PC-3 (cell line): ENCODE measurements at regions of chr10 and their contacts with region 1.

Region 1: GRCh38 chr10:35635576-35635975 is 6.5 kb downstream of the FZD8 start:
- DNase-seq: peak; percentile 100
- ATAC-seq: peak; percentile 21
- H3K4me3 ChIP-seq: peak overlapping the region; percentile 69
- H3K27ac ChIP-seq: peak overlapping the region; percentile 71
- H3K4me1 ChIP-seq: peaks cover 63% of the 10 kb centered on the region
- H3K27me3 ChIP-seq: no peaks in the 10 kb centered on the region
- CTCF ChIP-seq: peak; percentile 100

Region 2: DNA sequence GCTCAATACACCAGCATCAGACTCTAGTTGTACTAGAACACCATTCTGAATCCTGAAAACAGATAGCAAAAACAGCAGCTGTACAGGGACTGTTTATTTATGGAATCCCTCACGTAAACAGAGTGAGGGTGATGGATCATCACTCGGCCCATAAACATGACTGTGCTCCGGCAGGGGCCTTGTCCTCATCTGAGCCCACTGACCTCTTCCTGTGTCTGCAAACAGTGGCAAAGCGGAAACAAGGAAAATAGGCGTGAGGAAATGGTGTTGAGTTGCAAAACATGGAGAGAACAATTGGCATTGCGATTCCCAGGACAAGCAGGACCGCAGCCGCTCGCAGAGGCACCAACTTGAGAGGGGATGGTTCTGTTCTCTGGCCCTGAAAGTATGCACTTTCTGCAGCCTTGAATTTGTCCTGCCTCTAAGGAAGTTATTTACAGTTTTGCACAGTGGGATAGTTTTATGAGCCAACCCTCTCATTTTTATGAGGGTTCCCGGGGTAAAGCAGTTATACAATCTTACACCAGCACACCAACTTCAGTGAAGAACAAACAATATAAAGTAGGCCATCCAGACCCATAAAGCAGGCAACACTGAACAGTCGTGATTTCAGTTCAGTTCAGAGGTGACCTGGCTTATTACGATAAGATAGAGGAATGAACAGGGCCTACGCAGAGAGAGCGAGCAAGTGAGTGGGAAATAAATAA is 254.5 kb after region 1 on chr10:
- CTCF ChIA-PET with region 1: no interaction called
- POLR2A ChIA-PET with region 1: no interaction called
- intact Hi-C with region 1: loop called (anchors 2 kb)
- DNase-seq: peak; percentile 74
- ATAC-seq: peak; percentile 90
- H3K4me3 ChIP-seq: no peak overlapping the region
- H3K27ac ChIP-seq: peak overlapping the region; percentile 38
- H3K4me1 ChIP-seq: peaks cover 25% of the 10 kb centered on the region
- H3K27me3 ChIP-seq: no peaks in the 10 kb centered on the region
- CTCF ChIP-seq: no peak

Region 3: DNA sequence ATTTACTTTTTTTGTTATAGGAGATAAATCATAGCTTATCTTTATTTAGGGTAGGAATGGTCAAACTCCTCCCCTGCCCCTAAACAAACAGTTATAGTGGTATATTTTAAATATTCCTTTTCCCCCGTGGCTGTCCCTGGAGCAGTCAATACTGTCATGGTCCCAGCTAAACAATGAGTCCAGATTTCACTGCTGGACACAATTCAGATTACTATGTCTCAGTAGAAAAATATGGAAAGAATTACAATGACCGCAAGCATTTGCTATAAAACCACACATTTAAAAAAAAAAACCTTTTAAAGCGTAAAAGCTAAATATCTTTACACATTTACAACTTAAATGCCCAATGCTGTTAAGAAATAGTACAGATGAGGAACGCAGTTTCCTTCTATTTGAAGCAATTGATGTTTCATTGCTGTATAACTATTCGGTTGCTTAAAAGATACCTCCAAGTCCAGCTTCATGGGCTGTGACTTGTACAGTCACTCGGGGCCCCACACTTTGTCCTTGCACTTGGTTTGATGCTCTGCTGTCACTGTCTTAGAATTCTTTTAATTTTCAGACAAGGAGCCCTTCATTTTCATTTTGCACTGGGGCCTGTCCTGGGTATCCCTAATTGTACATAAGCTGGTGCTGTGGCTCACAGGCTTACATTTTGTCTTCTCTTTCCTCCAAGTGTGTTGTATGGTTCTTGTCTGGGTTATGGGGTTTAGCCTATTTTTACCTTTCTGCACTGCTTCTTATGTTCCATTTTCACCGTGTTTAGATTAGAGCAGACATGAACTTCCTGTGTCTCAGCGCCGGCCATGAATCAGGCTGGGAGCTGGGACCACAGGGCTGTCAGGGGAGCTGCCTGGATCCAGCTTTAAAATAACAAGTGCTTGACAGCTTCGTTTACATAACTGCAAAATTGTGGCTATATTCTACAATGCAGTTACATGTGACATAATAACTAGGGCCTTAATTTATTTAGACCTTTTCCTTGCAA is 536.7 kb after region 1 on chr10:
- CTCF ChIA-PET with region 1: interaction called, 6 read pairs
- POLR2A ChIA-PET with region 1: interaction called, 6 read pairs
- intact Hi-C with region 1: loop called (anchors 1 kb)
- DNase-seq: peak; percentile 99
- ATAC-seq: peak; percentile 71
- H3K4me3 ChIP-seq: peak overlapping the region; percentile 28
- H3K27ac ChIP-seq: peak overlapping the region; percentile 79
- H3K4me1 ChIP-seq: peaks cover 43% of the 10 kb centered on the region
- H3K27me3 ChIP-seq: no peaks in the 10 kb centered on the region
- CTCF ChIP-seq: no peak

Region 4: GRCh38 chr10:36462194-36462593 is 826.6 kb after region 1 on chr10:
- CTCF ChIA-PET with region 1: no interaction called
- POLR2A ChIA-PET with region 1: interaction called, 11 read pairs
- intact Hi-C with region 1: loop called (anchors 10 kb)
- DNase-seq: peak; percentile 95
- ATAC-seq: no peak
- H3K4me3 ChIP-seq: no peak overlapping the region
- H3K27ac ChIP-seq: no peak overlapping the region
- H3K4me1 ChIP-seq: peaks cover 40% of the 10 kb centered on the region
- H3K27me3 ChIP-seq: no peaks in the 10 kb centered on the region
- CTCF ChIP-seq: no peak

Region 5: DNA sequence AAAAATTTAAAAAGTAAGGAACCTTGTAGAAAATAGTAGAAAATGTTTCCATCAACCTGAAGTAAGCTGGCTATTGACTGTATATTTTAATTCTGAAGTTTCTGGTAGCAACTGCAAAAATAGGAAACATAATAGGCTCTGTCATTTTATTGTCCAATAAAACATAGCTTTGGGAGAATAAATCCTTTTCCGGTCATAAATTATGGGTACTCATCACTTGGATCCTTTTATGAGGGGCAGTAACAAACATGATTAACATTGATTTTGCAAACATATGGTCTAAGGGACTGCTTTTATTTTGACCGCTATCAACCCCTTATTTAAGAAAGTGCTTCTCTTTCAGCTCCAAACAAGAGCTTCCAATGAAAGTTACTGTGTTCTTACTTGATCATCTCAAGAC is 993.9 kb after region 1 on chr10:
- CTCF ChIA-PET with region 1: no interaction called
- POLR2A ChIA-PET with region 1: interaction called, 10 read pairs
- intact Hi-C with region 1: loop called (anchors 2 kb)
- DNase-seq: peak; percentile 76
- ATAC-seq: peak; percentile 71
- H3K4me3 ChIP-seq: no peak overlapping the region
- H3K27ac ChIP-seq: peak overlapping the region; percentile 81
- H3K4me1 ChIP-seq: peaks cover 24% of the 10 kb centered on the region
- H3K27me3 ChIP-seq: no peaks in the 10 kb centered on the region
- CTCF ChIP-seq: no peak

Region 6: DNA sequence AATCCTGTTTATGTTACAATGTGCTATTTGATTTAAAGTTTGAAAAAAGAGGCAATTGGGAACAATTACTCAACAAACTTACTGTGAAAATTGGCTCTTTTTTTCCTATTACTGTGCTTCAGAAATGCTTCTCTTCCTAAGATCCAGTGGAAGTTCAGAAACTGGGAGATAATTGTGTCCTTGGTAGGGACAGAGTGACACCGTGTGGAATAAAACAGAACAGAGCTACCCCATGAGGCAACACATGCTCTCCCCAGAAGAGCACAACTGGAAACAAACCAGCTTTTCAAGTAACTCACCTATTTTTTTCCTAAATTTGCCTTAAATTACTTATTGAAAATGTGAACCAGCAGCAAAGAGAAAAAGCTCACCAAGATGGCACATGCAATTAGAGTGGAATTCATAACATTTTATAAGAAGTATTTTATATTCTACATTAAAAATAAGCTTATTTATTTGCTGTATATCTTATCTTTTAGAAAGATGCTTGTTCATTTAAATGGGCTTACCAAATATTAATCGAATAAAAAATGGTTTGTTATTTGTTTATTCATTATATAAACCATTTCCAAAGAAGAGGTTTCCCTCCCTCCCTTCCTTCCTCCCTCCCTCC is 1143.8 kb after region 1 on chr10:
- CTCF ChIA-PET with region 1: interaction called, 85 read pairs
- POLR2A ChIA-PET with region 1: no interaction called
- intact Hi-C with region 1: loop called (anchors 1 kb)
- DNase-seq: peak; percentile 100
- ATAC-seq: peak; percentile 98
- H3K4me3 ChIP-seq: no peak overlapping the region
- H3K27ac ChIP-seq: peak overlapping the region; percentile 13
- H3K4me1 ChIP-seq: peaks cover 25% of the 10 kb centered on the region
- H3K27me3 ChIP-seq: no peaks in the 10 kb centered on the region
- CTCF ChIP-seq: peak; percentile 100